Activated T-helper 1 cell treated with anti-CD3 and anti-CD28 coated beads, Interleukin-12 subunit alpha, Interleukin-12 subunit beta, Interleukin-2, Interleukin-4 antibody, amounts not matched to agents 30 ng/mL and 10 ng/mL and 1 ng/mL, durations not matched to agents 14 hours and 24 hours and 36 hours (primary cell): ENCODE measurements at regions of chr14 and their contacts with region 1.

Region 1: GRCh38 chr14:36553656-36554260 is 28.7 kb downstream of the NKX2-8 start:
- DNase-seq: no peak
- H3K4me3 Mint-ChIP-seq: no peak overlapping the region
- H3K27ac Mint-ChIP-seq: no peak overlapping the region
- H3K4me1 Mint-ChIP-seq: no peaks in the 10 kb centered on the region
- H3K27me3 Mint-ChIP-seq: peaks cover 3% of the 10 kb centered on the region

Region 2: DNA sequence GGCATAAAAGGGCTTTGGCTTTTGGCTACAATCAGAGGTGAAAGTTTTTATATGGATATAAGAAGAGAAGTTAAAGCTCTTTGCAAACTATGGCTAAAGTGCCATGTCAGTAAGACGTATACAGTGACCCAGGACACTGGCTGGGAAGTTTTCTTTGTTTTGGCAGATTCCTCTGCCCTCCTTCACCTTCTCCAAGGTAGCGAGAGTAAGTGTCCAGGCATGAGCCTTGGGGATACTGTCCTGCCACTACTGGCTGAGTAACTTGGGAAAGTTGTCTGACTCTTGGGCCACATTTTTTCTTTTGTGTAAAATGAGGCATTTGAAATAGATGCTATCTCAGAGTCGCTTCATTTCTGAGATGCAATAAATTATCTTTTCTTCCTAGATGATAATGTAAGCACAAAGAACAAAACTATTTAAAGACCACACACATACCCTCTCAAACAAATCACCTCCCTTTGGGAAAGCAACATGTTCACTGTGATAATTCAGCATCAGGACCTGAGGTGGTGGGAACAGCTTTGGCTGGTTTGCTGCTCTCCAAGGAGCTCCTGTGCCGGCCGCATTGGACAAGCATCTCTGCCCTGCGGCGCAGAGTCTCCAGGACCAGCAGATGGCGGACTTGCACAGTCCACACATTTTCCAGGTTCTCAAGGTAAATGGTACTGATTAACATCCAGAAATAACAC is 483.6 kb before region 1 on chr14:
- intact Hi-C with region 1: loop called (anchors 2 kb)
- DNase-seq: no peak
- H3K4me3 Mint-ChIP-seq: no peak overlapping the region
- H3K27ac Mint-ChIP-seq: no peak overlapping the region
- H3K4me1 Mint-ChIP-seq: no peaks in the 10 kb centered on the region
- H3K27me3 Mint-ChIP-seq: peaks cover 22% of the 10 kb centered on the region

Region 3: DNA sequence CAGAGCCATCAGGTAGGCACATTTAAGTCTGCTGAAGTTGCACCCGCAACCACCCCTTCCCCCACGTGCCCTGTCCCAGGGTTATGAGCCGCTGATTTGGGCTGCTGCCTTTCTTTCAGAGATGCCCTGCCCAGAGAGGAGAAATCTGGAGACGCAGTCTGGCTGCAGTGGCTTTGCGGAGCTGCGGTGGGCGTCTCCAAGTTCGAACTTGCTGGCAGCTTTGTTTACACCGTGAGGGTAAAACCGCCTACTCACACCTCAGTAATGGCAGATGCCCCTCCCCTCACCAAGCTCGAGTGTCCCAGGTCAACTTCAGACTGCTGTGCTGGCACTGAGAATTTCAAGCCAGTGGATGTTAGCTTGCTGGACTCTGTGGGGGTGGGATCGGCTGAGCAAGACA is 392.0 kb before region 1 on chr14:
- intact Hi-C with region 1: no loop called
- DNase-seq: no peak
- H3K4me3 Mint-ChIP-seq: no peak overlapping the region
- H3K27ac Mint-ChIP-seq: no peak overlapping the region
- H3K4me1 Mint-ChIP-seq: no peaks in the 10 kb centered on the region
- H3K27me3 Mint-ChIP-seq: peaks cover 2% of the 10 kb centered on the region

Region 4: GRCh38 chr14:36604757-36605505 is 51.2 kb after region 1 on chr14:
- intact Hi-C with region 1: loop called (anchors 1 kb)
- DNase-seq: peak; percentile 12
- H3K4me3 Mint-ChIP-seq: no peak overlapping the region
- H3K27ac Mint-ChIP-seq: no peak overlapping the region
- H3K4me1 Mint-ChIP-seq: no peaks in the 10 kb centered on the region
- H3K27me3 Mint-ChIP-seq: peaks cover 2% of the 10 kb centered on the region